ENCODE measurements at regions of chr19 and their contacts with region 1.

Region 1: DNA sequence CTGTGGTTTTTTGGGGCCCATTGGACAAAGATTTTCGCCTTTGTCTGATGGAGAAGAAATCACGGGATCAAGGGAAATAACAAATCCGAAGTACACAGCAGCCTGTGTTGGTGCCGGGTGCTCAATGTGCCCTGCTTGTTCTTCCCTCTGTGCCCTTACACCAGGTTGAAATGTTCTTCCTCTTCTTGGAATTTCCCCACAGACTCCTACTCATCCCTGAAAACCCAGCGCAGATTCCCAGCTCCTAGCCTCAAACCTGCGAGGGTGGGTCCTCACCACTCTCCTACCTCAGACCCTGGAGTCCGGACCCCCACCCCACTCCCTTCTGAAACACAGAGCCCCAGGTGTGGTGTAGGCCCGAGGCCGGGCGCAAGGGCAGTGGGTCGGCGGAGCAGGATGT is 4.9 kb upstream of the ACP4 start:
- DNase-seq: no peak
- ATAC-seq: no peak

Region 2: DNA sequence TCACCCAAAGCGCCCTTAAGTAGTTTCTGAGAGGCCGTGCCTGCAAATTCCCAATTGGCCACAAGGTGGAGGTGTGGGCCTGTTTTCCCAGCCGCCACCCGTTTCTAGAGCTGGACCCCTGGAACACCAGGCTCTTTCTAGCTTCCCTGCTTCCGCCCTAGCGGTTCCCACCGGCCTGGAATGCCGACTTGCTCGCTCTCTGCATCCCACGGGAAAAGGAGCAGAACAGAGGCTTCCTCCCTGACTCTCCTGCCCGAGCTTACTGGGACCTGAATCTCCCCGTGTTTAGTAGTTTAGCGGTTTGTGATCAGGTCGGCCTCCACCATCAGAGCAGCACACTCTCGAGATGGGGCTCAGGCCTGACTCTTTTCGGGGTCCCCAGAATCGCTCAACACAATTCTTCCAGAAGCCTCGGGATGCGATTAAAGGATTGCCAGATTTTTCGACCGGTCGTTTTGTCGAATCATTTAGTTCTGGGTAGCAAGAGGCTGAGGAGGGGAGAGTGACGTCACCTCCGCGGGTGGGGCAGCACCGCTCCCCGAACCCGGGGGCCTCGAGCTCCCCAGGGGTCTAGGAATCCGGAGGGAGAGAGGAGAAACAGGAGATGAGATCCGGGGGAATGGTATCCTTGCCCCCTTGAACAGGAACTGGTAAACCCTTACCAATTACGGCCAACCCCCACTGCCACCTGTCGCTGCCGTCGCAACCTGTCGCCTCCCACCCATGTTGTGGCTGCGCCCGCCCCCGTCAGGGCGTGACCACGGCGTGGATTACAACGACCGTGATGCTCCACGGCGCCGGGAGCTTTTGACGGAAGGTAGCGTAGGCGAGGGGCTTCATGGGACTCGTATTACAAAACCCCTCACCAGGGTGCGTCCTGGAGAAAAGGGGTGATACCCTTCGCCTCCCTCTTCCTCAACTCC is 427.9 kb before region 1 on chr19:
- intact Hi-C with region 1: loop called (anchors 5 kb)
- DNase-seq: peak; percentile 86
- ATAC-seq: peak; percentile 87

Region 3: DNA sequence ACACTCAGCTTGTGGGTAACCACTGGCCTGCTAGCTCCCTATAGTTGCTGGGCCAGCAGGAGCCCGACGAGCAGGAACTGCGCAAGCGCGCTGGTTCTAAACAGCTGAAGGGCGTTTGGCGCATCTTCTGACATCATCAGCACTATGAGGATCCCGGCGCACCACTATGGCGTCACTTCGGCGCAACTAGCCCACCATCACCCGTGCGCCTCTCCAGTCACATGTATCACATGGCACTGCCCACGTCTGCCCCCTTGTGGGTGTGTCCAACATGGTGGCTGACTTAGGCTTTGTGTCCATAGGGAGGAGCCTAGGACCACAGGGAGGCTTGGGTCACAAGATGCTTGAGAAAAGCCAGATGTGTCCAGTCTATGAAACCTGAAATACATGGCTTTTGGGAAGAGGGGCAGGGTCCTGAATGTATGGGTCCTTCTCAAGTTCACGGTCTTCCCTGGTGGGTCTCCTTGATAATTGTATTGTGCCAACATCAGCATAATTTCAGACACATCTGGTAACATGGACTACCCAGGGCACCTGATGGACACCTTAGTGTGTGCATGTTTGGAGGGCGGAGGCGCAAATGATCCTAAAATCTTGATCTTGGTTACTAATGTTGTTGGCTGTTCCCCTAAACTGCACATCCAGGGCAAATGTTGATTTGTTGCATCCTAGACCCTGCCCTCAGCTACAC is 107.9 kb after region 1 on chr19:
- intact Hi-C with region 1: no loop called
- DNase-seq: no peak
- ATAC-seq: no peak